ENCODE measurements at regions of chr10 and their contacts with region 1.

Region 1: DNA sequence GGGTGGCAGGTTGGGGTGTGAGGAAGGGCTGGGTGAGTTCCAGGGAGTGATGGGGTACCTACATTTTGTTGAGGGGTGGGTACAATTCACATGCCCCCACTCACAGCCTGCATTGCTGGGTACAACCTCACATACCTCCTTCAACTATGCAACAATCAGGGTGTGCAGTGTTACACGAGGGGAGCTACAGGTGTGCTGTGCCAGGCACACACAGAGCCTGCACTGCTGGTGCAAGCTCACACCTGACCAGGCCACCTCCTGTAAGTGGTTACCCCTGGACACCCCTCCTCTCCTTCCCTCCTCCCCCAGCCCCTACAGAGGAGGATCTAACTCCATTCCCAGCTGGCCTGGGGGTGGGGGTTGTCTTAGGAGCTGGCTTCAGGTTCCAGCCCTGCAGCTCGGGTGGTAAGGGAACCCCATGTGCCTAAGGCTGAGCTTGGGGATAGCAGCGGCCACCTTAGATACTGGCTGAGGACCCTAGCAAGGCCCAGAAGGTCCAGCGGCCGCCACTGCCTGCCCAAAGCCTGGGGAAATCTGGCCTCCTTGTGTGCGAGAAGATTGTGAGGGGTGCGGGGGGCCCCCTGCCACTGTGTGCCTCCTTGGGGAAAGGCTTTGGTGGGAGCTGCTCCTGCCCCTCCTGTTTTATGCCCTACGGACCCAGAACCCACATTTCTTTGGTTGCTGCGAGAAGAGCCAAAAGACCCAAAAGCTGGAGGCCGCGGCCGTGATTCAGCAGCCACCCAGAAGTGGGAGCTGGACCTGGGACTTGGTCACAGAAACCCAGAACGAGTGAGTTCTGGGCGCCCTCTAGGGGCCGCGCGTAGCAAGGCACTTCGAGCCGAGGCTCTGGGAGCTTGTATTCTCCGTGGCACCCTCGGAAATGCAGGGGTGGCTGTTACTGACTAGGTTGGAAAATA is 10.8 kb downstream of the TLX1 start:
- DNase-seq: peak; percentile 83
- ATAC-seq: peak; percentile 90
- H3K4me3 Mint-ChIP-seq: no peak overlapping the region
- H3K27ac Mint-ChIP-seq: no peak overlapping the region
- H3K4me1 Mint-ChIP-seq: peaks cover 5% of the 10 kb centered on the region
- H3K27me3 Mint-ChIP-seq: peaks cover 79% of the 10 kb centered on the region

Region 2: GRCh38 chr10:101050208-101051069 is 91.4 kb before region 1 on chr10:
- CTCF ChIA-PET with region 1: interaction called, 25 read pairs
- POLR2A ChIA-PET with region 1: no interaction called
- DNase-seq: peak; percentile 85
- ATAC-seq: peak; percentile 89
- H3K4me3 Mint-ChIP-seq: peak overlapping the region; percentile 25
- H3K27ac Mint-ChIP-seq: no peak overlapping the region
- H3K4me1 Mint-ChIP-seq: peaks cover 34% of the 10 kb centered on the region
- H3K27me3 Mint-ChIP-seq: peaks cover 48% of the 10 kb centered on the region

Region 3: GRCh38 chr10:101067356-101068083 is 74.4 kb before region 1 on chr10:
- CTCF ChIA-PET with region 1: interaction called, 13 read pairs
- POLR2A ChIA-PET with region 1: no interaction called
- DNase-seq: peak; percentile 85
- ATAC-seq: peak; percentile 70
- H3K4me3 Mint-ChIP-seq: peak overlapping the region; percentile 76
- H3K27ac Mint-ChIP-seq: no peak overlapping the region
- H3K4me1 Mint-ChIP-seq: peaks cover 32% of the 10 kb centered on the region
- H3K27me3 Mint-ChIP-seq: peaks cover 52% of the 10 kb centered on the region

Region 4: DNA sequence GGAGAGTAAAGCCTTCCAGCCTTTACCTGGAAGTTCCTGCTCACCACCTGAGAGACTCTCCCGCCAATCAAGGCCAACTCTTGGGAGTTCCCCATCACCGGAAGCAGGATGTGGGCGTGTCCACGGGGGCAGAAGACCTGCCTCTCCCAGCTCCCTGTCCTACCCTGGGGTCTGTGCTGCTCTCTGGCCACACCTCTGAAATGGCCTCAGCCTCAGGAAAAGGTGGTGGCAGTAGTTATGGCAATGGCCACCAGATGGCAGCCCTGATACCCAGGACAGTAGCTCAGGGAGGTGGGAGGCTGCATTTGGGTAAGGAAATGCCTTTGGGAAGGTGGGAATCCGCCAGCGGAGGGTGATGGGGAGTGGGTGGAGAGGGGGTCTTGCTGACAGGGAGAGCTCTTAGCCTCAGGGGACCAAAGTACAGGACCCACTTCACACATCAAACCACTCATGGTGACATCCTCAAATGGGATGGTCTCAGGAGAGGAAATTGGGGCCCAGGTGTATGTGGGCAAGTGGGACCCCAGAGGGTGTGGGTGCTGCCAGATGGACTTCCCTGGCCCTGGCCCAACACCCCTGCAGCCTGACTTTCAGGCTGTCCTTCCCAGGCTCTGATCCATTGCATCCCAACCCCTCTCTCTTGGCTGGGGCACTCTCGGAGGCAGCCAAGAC is 46.2 kb before region 1 on chr10:
- CTCF ChIA-PET with region 1: interaction called, 355 read pairs
- POLR2A ChIA-PET with region 1: interaction called, 9 read pairs
- DNase-seq: peak; percentile 79
- ATAC-seq: peak; percentile 90
- H3K4me3 Mint-ChIP-seq: no peak overlapping the region
- H3K27ac Mint-ChIP-seq: no peak overlapping the region
- H3K4me1 Mint-ChIP-seq: no peaks in the 10 kb centered on the region
- H3K27me3 Mint-ChIP-seq: peaks cover 34% of the 10 kb centered on the region

Region 5: GRCh38 chr10:101126684-101127628 is 14.9 kb before region 1 on chr10:
- CTCF ChIA-PET with region 1: interaction called, 42 read pairs
- POLR2A ChIA-PET with region 1: no interaction called
- DNase-seq: no peak
- ATAC-seq: no peak
- H3K4me3 Mint-ChIP-seq: no peak overlapping the region
- H3K27ac Mint-ChIP-seq: no peak overlapping the region
- H3K4me1 Mint-ChIP-seq: peaks cover 12% of the 10 kb centered on the region
- H3K27me3 Mint-ChIP-seq: peaks cover 77% of the 10 kb centered on the region

Region 6: DNA sequence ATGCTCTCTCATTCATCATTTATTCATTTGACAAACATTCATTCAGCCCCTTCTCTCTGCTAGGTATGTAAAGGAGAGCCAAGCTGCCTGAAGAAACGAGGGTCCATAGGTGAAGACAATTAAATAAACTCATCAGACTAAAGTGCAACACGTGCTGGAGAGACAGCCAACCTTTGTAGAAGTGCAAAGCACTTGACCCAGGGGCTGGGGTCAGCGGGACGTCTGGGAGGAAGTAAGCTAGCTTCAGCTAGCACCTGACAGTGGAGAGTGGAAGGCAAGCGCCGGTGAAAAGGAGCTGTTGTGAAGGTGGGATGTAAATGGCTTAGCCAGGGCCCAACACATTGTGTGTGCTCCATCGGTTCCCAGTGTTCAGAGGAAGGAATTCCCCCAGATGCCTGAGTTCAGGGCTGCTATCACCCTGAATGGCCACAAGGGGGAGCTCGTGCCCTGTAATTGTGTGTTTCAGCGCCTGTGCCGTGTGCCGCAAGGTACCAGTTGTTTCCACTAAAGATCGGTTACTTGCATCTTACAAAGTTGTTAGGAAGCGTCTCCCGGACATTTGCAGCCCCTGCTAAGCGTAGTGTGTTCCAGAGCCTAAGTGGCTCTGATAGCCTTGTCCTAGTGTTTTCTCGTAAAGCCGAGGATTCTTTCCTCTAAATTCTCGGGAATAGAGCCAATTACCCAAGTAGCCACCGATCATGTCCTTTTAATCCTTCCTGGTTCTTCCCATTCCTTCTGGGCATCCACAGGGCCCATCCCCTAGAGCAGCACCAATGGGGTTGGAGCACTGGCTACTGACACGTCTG is 19.8 kb after region 1 on chr10:
- CTCF ChIA-PET with region 1: interaction called, 46 read pairs
- POLR2A ChIA-PET with region 1: no interaction called
- DNase-seq: peak; percentile 77
- ATAC-seq: peak; percentile 88
- H3K4me3 Mint-ChIP-seq: no peak overlapping the region
- H3K27ac Mint-ChIP-seq: no peak overlapping the region
- H3K4me1 Mint-ChIP-seq: peaks cover 4% of the 10 kb centered on the region
- H3K27me3 Mint-ChIP-seq: peaks cover 52% of the 10 kb centered on the region

Region 7: DNA sequence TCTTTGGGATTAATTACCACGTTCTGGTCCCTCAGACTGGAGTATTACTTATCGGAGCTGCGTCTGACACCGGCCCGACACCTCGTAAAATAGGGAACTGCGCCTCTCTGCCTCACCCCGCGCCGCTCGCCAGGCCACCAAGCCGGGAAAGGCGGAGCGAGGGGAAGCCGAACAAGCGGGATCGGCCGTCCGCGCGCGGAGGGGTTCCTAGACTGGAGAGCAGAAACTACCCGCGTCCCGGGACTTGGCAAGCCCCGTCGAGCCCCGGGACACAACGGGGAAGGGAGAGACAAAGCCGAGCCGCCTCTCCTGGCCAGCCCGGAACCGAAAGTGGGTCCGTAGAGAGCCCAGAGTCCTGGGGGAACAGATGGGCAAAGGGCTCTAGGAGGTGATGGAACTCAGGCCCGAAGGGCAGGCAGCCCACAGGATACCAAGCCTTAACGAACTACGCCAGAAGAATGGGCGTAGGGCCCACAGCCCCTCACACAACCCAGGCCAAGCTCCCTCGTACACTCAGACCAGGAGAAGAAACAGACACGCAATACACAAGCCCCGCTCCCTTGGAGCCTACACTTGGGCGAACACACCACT is 80.9 kb after region 1 on chr10:
- CTCF ChIA-PET with region 1: interaction called, 16 read pairs
- POLR2A ChIA-PET with region 1: no interaction called
- DNase-seq: no peak
- ATAC-seq: no peak
- H3K4me3 Mint-ChIP-seq: no peak overlapping the region
- H3K27ac Mint-ChIP-seq: no peak overlapping the region
- H3K4me1 Mint-ChIP-seq: peaks cover 38% of the 10 kb centered on the region
- H3K27me3 Mint-ChIP-seq: peaks cover 84% of the 10 kb centered on the region